ENCODE measurements at regions of chr5 and their contacts with region 1.

Region 1: DNA sequence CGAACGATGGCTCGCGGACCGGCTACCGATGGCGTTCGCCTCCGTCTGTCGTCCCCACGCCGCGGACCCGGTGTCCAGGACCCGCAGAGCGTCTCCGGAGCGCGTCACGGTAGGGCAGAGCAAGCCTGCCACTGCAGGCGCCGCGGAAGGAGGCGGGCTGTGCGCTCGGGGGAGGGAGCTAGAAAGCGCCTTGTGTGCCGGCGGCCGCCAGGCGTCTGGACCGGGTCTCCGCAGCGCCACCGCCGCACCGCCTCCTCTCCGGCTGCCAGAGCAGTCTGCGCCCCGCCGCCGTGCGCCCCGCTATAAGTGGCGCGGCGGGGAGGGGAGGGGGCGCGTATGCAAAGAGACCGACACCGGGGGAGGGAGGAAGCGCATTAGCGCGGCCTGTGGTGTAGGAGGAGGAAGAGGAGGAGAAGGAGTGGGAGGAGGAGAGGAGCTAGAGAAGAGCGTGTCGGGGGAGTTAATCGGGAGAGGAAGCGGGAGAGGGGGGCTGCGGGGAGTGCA is at the start of gene ENC1:
- DNase-seq: peak; percentile 89 to 96 (median 90)
- ATAC-seq: peak; percentile 76 to 94 (median 86)
- H3K4me3 ChIP-seq: peak within 1 kb of the TSS; percentile 69 to 91 (median 80)
- H3K27ac ChIP-seq: peak within 1 kb of the TSS; percentile 81 to 96 (median 92)
- H3K4me1 ChIP-seq: peaks cover 0 to 62% (median 31%) of the 10 kb centered on the region in 12 donors
- H3K27me3 ChIP-seq: no peaks in the 10 kb centered on the region
- CTCF ChIP-seq: peak; percentile 39 to 66 (median 54)
- POLR2A ChIP-seq: peak in 1 of 2 donors; percentile 71
- total RNA-seq, gene ENC1: 3.1 to 11.0 (median 5.5) TPM

Region 2: GRCh38 chr5:73902327-73903051 is 738.0 kb before region 1 on chr5:
- intact Hi-C with region 1: loop called in 4 of 10 experiments (anchors 1 to 2 kb)
- DNase-seq: peak in 1 of 5 donors; percentile 14
- ATAC-seq: peak in 1 of 4 donors; percentile 29
- H3K4me3 ChIP-seq: peak overlapping the region in 2 of 12 donors; percentile 9 to 15
- H3K27ac ChIP-seq: peak overlapping the region in 3 of 12 donors; percentile 32 to 59 (median 49)
- H3K4me1 ChIP-seq: peaks cover 0 to 26% (median 5%) of the 10 kb centered on the region in 12 donors
- H3K27me3 ChIP-seq: no peaks in the 10 kb centered on the region
- CTCF ChIP-seq: peak; percentile 81 to 91 (median 86)
- POLR2A ChIP-seq: no peak

Region 3: DNA sequence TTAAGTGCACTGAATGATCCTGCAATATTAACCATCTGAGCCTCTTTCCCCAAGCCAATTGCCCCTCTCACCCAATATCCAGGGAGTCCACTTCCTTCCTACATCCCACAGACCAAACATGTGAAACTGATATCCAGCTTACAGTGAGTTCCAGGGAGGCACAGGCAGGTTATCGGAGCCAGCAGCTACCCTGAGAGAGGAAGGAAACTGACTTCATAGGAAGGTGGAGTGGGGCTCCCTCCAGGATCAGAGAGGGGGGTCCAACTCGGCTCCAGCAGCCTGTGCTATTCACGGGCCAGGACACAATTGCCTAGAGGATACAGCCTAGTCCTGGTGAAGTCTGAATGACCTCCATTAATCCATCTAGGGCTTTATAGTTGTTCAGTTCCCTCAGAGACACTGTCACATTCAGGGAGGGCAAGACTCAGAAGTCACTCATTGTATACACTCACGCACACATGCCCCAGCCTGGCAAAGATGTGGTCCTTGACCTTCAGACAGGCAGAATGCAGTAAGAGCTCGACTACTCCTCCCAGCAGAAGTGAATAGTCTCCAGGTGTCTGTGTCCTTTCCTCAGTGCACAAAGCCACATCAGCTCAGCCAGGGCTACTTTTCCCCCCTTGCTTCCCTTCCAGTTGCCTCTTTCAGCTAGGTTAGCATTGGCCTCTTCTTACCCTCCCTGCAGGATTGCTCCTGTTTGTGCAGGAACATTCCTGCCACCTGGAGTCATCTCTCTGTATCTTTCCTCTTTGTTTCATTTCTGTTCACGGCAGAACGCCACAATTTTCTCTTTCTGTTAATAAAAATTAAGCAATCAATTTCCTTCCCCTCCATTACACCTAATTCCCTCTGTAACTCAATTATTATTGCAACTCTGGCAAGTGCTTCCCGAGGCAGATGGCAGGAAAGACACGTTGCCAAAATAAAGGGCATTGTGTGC is 512.9 kb before region 1 on chr5:
- intact Hi-C with region 1: loop called in 1 of 10 experiments (anchors 10 kb)
- DNase-seq: peak in 2 of 5 donors; percentile 27 to 29
- ATAC-seq: peak; percentile 14 to 86 (median 68)
- H3K4me3 ChIP-seq: no peak overlapping the region
- H3K27ac ChIP-seq: peak overlapping the region in 1 of 12 donors; percentile 13
- H3K4me1 ChIP-seq: peaks cover 0 to 25% (median 12%) of the 10 kb centered on the region in 12 donors
- H3K27me3 ChIP-seq: no peaks in the 10 kb centered on the region
- CTCF ChIP-seq: peak in 1 of 12 donors; percentile 6
- POLR2A ChIP-seq: no peak

Region 4: GRCh38 chr5:74251141-74252035 is 389.1 kb before region 1 on chr5:
- intact Hi-C with region 1: loop called in 1 of 10 experiments (anchors 10 kb)
- DNase-seq: peak in 4 of 5 donors; percentile 25 to 60 (median 28)
- ATAC-seq: peak; percentile 44 to 94 (median 90)
- H3K4me3 ChIP-seq: no peak overlapping the region
- H3K27ac ChIP-seq: peak overlapping the region in 3 of 12 donors; percentile 13 to 42 (median 23)
- H3K4me1 ChIP-seq: peaks cover 0 to 16% (median 2%) of the 10 kb centered on the region in 12 donors
- H3K27me3 ChIP-seq: no peaks in the 10 kb centered on the region
- CTCF ChIP-seq: no peak
- POLR2A ChIP-seq: no peak

Region 5: GRCh38 chr5:74382987-74383593 is 257.4 kb before region 1 on chr5:
- intact Hi-C with region 1: loop called in 4 of 10 experiments (anchors 5 to 10 kb)
- DNase-seq: peak in 4 of 5 donors; percentile 73 to 78 (median 76)
- ATAC-seq: peak; percentile 72 to 93 (median 86)
- H3K4me3 ChIP-seq: peak overlapping the region in 1 of 12 donors; percentile 8
- H3K27ac ChIP-seq: peak overlapping the region; percentile 31 to 90 (median 70)
- H3K4me1 ChIP-seq: peaks cover 7 to 58% (median 33%) of the 10 kb centered on the region in 12 donors
- H3K27me3 ChIP-seq: no peaks in the 10 kb centered on the region
- CTCF ChIP-seq: no peak
- POLR2A ChIP-seq: no peak

Region 6: GRCh38 chr5:74538206-74538661 is 102.3 kb before region 1 on chr5:
- intact Hi-C with region 1: loop called in 4 of 10 experiments (anchors 2 to 10 kb)
- DNase-seq: peak; percentile 78 to 84 (median 81)
- ATAC-seq: peak; percentile 91 to 98 (median 98)
- H3K4me3 ChIP-seq: no peak overlapping the region
- H3K27ac ChIP-seq: peak overlapping the region in 8 of 12 donors; percentile 5 to 82 (median 42)
- H3K4me1 ChIP-seq: peaks cover 0 to 35% (median 11%) of the 10 kb centered on the region in 12 donors
- H3K27me3 ChIP-seq: no peaks in the 10 kb centered on the region
- CTCF ChIP-seq: no peak
- POLR2A ChIP-seq: no peak